Ovary (tissue), 10 donors: ENCODE measurements at regions of chr3 and their contacts with region 1.

Region 1: DNA sequence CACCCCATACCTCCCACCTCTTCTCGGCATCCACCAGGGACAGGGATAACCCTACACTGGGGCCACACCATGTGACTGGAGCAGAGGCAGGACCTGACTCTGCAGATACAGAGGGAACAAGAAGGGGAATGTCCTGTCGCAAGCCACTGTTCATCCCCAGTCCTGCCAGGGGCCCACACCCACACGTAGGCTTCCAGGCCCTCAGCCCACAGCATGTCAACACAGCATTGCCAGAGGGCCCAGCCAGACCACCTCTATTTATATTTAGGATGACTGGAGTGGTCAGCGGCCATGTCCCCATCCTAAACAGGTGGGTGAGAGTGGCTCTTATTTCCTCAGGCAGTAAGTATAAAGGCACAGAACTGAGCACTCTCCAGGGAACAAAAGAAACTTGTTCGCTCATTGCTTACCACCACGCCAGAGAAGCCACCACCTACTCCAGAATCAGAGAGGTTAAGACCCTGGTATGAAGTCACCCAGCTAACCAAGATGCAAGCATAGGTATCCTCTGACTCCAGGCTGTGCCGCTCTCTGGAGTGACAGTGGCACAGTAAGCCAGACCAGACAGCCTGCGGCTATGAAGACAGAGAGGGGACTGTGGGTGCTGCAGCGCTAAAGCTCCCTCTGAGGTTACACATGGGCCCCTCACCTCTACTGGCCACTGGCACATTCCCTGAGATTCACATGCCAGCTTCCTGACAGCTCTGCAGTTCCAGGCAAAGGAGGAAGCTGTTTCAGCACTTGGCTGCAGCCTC is 67.9 kb downstream of the LRIG1 start:
- DNase-seq: no peak
- H3K4me3 ChIP-seq: no peak overlapping the region
- H3K27ac ChIP-seq: no peak overlapping the region
- H3K4me1 ChIP-seq: peaks cover 30% of the 10 kb centered on the region
- H3K27me3 ChIP-seq: no peaks in the 10 kb centered on the region
- CTCF ChIP-seq: no peak
- EP300 ChIP-seq: no peak
- POLR2A ChIP-seq: no peak

Region 2: DNA sequence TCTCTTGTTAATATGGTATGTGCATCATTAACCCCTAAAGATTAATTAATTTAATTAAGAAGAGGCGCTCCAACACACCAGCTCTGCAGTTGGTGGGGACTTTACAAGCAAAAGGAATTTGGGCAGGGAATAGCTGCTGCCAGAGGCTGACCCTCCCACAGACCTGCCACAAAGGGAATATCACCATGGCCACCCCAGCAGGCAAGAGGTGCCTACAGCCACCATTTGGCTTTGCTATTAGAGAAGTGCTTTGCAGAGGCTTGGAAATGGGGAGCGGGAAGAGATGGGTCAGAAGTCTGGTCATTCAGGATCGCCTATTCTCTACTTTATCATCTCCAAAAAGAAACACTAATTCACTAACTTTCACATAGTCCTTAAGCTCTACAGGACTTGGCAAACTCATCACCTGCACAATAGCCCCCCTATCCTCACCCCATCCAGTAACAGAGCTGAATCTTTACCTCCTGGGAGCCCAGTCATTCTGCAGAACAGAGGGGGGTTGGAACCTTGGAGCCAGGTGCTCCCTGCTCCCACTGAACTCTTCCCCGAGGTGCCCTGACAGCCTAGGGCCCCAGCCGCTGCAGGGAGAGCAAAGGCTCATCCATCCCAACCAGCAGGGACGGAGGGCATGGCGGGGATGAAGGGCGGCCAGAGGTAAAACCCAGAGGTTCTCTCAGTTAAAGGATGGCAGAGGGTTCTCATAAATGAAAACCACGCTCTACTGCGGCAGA is 38.2 kb after region 1 on chr3:
- intact Hi-C with region 1: loop called in 1 of 4 experiments (anchors 1 kb)
- DNase-seq: no peak
- H3K4me3 ChIP-seq: no peak overlapping the region
- H3K27ac ChIP-seq: no peak overlapping the region
- H3K4me1 ChIP-seq: peaks cover 19% of the 10 kb centered on the region
- H3K27me3 ChIP-seq: no peaks in the 10 kb centered on the region
- CTCF ChIP-seq: no peak
- EP300 ChIP-seq: no peak
- POLR2A ChIP-seq: no peak